ENCODE measurements at regions of chr12 and their contacts with region 1.

Region 1: DNA sequence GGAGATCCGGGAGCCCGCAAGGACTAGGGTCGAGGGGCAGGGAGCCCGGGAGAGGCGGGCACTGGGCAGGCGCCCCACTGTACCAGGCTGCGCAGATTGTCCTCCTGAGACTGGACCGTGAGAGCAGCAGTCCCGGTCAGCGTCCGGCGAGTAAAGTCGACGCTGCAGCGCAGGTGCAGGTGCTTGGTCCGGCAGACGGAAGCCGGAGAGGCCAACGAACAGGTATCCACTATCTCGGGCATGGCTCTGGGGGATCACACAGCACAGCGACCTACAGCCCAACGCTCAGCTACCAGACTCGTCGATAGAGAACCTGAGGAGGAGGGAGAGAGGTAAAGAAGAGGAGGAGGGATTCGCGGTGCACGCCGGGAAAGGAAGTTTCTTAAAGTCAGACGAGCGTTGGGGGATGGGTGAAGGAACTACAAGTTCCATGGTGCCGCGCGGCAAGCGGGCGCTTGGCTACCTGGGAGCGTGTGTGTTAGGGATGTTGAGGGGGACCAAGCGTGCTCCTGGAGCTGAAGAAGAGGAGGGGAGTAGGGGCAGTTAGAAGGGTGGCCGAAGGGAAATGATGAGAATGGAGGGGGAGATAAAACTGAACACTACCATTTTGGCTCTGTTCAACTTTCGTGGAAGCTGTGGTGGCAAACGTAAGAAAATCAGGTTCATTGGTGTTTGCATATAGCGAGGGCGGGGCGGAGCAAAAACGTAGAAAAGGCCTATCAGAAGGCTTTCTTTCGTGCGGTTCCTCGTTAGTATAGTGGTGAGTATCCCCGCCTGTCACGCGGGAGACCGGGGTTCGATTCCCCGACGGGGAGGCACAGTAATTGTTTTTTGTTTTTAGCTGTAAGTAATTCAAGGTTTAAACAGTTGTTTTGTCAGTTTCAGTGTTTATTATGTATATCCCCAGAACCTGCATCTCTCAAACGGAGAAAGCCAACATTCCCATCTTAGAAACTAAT is at the start of gene LTA4H:
- DNase-seq: peak; percentile 98
- ATAC-seq: peak; percentile 95
- H3K4me3 Mint-ChIP-seq: no peak within 1 kb of the TSS
- H3K27ac Mint-ChIP-seq: no peak within 1 kb of the TSS
- H3K4me1 Mint-ChIP-seq: peaks cover 13% of the 10 kb centered on the region
- H3K27me3 Mint-ChIP-seq: no peaks in the 10 kb centered on the region
- total RNA-seq, gene LTA4H: 138 to 147 TPM

Region 2: DNA sequence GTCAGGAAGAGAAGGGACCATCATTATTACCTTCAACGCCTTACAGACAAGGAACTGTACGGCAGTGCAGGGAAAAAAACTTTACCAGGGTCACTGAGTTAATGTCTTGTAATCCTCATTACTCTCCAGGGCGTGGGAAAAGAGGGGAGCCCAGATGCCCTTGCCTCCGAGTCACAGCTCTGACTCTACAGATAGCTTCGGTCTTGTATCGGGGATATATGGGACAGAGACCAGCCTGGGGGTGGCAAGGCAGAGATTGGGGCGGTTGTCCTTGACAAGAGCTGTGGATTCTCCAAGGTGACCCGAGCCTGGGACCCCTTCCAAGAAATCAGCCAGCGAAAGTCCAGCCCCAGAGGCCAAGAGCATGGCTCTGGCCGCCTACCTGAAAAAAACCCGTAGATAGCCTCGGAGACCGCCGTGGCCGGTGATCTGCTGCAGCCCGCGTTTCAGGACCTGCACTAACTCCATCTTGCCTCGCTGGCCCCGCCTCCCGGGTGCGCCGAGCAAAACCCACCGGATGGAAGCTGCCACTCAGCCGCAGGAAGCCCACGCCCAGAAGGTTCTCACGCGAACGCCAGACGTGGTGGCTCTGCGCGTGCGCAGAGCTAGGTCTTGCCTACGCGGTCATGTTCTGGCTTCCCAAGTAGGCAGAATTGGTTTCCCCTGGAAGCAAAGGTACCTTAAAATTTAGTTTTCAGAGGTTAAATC is 1032.2 kb before region 1 on chr12 and contains the start of gene NDUFA12:
- CTCF ChIA-PET with region 1: no interaction called
- POLR2A ChIA-PET with region 1: no interaction called
- intact Hi-C with region 1: loop called in 1 of 2 experiments (anchors 1 kb)
- DNase-seq: peak; percentile 98
- ATAC-seq: peak; percentile 99
- H3K4me3 Mint-ChIP-seq: peak within 1 kb of the TSS; percentile 95
- H3K27ac Mint-ChIP-seq: peak within 1 kb of the TSS; percentile 90
- H3K4me1 Mint-ChIP-seq: peaks cover 49% of the 10 kb centered on the region
- H3K27me3 Mint-ChIP-seq: no peaks in the 10 kb centered on the region
- total RNA-seq, gene NDUFA12: 135 to 194 TPM

Region 3: GRCh38 chr12:95858479-95859343 is 176.8 kb before region 1 on chr12 and contains the start of gene SNRPF:
- CTCF ChIA-PET with region 1: no interaction called
- POLR2A ChIA-PET with region 1: no interaction called
- intact Hi-C with region 1: loop called in 1 of 2 experiments (anchors 1 kb)
- DNase-seq: peak; percentile 95
- ATAC-seq: peak; percentile 95
- H3K4me3 Mint-ChIP-seq: no peak within 1 kb of the TSS
- H3K27ac Mint-ChIP-seq: peak within 1 kb of the TSS; percentile 59
- H3K4me1 Mint-ChIP-seq: peaks cover 28% of the 10 kb centered on the region
- H3K27me3 Mint-ChIP-seq: peaks cover 3% of the 10 kb centered on the region
- total RNA-seq, gene SNRPF: 23.1 to 61.1 TPM

Region 4: GRCh38 chr12:96047229-96048211 is 12.0 kb after region 1 on chr12:
- CTCF ChIA-PET with region 1: interaction called, 5 read pairs
- POLR2A ChIA-PET with region 1: interaction called, 5 read pairs
- intact Hi-C with region 1: loop called (anchors 1 kb)
- DNase-seq: peak; percentile 30
- ATAC-seq: peak; percentile 83
- H3K4me3 Mint-ChIP-seq: peak overlapping the region; percentile 20
- H3K27ac Mint-ChIP-seq: peak overlapping the region; percentile 92
- H3K4me1 Mint-ChIP-seq: peaks cover 58% of the 10 kb centered on the region
- H3K27me3 Mint-ChIP-seq: no peaks in the 10 kb centered on the region

Region 5: DNA sequence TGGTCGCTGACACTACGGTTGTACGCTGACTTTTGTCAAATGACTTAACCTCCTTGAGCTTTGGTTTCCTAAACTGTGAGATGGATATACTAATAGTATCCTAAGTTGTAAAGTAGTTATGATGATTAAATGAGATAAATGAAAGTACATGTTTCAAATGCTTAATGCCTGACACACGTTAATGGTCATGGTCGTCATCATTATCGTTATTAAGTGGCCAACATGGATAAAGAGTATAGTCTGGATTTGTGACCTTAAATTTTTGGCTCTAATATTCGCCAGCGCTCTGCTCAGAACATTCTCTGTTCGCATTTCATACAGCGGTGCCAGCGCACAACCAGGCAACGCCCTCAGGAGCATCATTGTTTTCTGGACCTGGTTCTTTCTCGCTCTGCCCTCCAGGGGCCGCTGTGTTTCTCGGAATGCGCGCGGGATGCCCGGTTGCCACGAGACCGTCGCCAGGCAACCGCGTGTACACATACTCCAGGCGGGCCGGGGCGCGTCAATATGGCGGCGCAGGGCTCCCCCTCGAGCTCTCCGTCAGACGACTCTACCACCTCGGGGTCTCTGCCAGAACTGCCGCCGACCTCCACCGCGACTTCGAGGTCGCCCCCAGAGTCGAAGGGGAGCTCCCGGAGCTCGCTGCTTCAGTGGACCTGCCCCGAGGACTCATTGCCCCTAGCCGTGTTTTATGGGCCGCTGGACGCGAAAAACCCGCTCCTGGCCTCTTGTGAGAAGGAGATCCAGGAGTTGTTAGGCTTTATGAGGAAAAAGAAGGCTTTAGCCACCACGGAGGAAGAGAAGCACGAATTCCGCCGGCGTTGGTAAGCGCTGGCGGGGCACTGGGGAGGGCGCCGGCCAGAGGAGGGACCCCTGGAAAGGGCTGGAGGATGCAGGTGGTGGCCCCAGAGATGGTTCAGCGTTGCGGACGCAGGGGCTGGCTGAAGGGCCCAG is 453.8 kb after region 1 on chr12 and contains the start of gene CFAP54:
- CTCF ChIA-PET with region 1: no interaction called
- POLR2A ChIA-PET with region 1: no interaction called
- intact Hi-C with region 1: loop called in 1 of 2 experiments (anchors 1 kb)
- DNase-seq: peak; percentile 97
- ATAC-seq: peak; percentile 86
- H3K4me3 Mint-ChIP-seq: peak within 1 kb of the TSS; percentile 80
- H3K27ac Mint-ChIP-seq: peak within 1 kb of the TSS; percentile 66
- H3K4me1 Mint-ChIP-seq: peaks cover 33% of the 10 kb centered on the region
- H3K27me3 Mint-ChIP-seq: no peaks in the 10 kb centered on the region
- total RNA-seq, gene CFAP54: 0.37 to 0.44 TPM

Region 6: GRCh38 chr12:96906849-96907670 is 871.5 kb after region 1 on chr12 and contains the start of gene NEDD1:
- CTCF ChIA-PET with region 1: no interaction called
- POLR2A ChIA-PET with region 1: no interaction called
- intact Hi-C with region 1: loop called in 1 of 2 experiments (anchors 2 kb)
- DNase-seq: peak; percentile 89
- ATAC-seq: peak; percentile 84
- H3K4me3 Mint-ChIP-seq: peak within 1 kb of the TSS; percentile 84
- H3K27ac Mint-ChIP-seq: peak within 1 kb of the TSS; percentile 97
- H3K4me1 Mint-ChIP-seq: peaks cover 38% of the 10 kb centered on the region
- H3K27me3 Mint-ChIP-seq: no peaks in the 10 kb centered on the region
- total RNA-seq, gene NEDD1: 57.9 to 69.3 TPM

Measured in activated CD4-positive, alpha-beta T cell treated with anti-CD3 and anti-CD28 coated beads for 36 hours (primary cell).